Left lung (tissue), 14 donors: ENCODE measurements at regions of chr11 and their contacts with region 1.

Region 1: GRCh38 chr11:66694732-66695207 is 17.1 kb upstream of the RBM4B start:
- DNase-seq: peak; percentile 70 to 89 (median 87)
- ATAC-seq: peak; percentile 99
- H3K4me3 ChIP-seq: no peak overlapping the region
- H3K27ac ChIP-seq: no peak overlapping the region
- H3K4me1 ChIP-seq: peaks cover 0 to 3% of the 10 kb centered on the region in 2 donors
- H3K27me3 ChIP-seq: no peaks in the 10 kb centered on the region
- CTCF ChIP-seq: peak; percentile 83 to 89

Region 2: GRCh38 chr11:66438504-66439466 is 256.0 kb before region 1 on chr11 and contains the start of gene MRPL11:
- intact Hi-C with region 1: no loop called
- DNase-seq: peak; percentile 89 to 93 (median 92)
- ATAC-seq: peak; percentile 100
- H3K4me3 ChIP-seq: peak within 1 kb of the TSS; percentile 91 to 93
- H3K27ac ChIP-seq: peak within 1 kb of the TSS; percentile 72 to 79
- H3K4me1 ChIP-seq: peaks cover 5 to 19% of the 10 kb centered on the region in 2 donors
- H3K27me3 ChIP-seq: no peaks in the 10 kb centered on the region
- CTCF ChIP-seq: peak; percentile 34 to 37
- polyA plus RNA-seq, gene MRPL11: 57.2 to 73.5 (median 64.2) TPM

Region 3: DNA sequence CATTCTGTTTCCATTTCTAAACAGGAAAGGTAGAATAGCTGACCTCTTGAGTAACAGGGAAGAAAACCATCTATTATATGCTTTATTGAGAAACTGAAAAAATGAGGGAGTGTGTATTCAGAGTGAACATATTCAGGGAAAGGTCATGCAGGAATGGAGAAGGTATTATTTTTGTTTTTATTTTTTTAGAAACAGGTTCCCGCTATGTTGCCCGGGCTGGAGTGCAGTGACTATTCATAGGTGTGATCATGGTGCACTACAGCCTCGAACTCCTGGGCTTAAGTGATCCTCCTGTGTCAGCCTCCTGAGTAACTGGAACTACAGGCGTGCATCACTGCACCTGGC is 139.7 kb after region 1 on chr11:
- intact Hi-C with region 1: loop called in 1 of 2 experiments (anchors 5 kb)
- DNase-seq: no peak
- ATAC-seq: no peak
- H3K4me3 ChIP-seq: no peak overlapping the region
- H3K27ac ChIP-seq: no peak overlapping the region
- H3K4me1 ChIP-seq: peaks cover 0 to 8% of the 10 kb centered on the region in 2 donors
- H3K27me3 ChIP-seq: no peaks in the 10 kb centered on the region
- CTCF ChIP-seq: no peak

Region 4: GRCh38 chr11:66851698-66852465 is 157.1 kb after region 1 on chr11:
- intact Hi-C with region 1: no loop called
- DNase-seq: peak in 1 of 4 donors; percentile 77
- ATAC-seq: no peak
- H3K4me3 ChIP-seq: no peak overlapping the region
- H3K27ac ChIP-seq: no peak overlapping the region
- H3K4me1 ChIP-seq: peaks cover 4 to 8% of the 10 kb centered on the region in 2 donors
- H3K27me3 ChIP-seq: no peaks in the 10 kb centered on the region
- CTCF ChIP-seq: no peak